B cell (primary cell): ENCODE measurements at regions of chr1 and their contacts with region 1.

Region 1: DNA sequence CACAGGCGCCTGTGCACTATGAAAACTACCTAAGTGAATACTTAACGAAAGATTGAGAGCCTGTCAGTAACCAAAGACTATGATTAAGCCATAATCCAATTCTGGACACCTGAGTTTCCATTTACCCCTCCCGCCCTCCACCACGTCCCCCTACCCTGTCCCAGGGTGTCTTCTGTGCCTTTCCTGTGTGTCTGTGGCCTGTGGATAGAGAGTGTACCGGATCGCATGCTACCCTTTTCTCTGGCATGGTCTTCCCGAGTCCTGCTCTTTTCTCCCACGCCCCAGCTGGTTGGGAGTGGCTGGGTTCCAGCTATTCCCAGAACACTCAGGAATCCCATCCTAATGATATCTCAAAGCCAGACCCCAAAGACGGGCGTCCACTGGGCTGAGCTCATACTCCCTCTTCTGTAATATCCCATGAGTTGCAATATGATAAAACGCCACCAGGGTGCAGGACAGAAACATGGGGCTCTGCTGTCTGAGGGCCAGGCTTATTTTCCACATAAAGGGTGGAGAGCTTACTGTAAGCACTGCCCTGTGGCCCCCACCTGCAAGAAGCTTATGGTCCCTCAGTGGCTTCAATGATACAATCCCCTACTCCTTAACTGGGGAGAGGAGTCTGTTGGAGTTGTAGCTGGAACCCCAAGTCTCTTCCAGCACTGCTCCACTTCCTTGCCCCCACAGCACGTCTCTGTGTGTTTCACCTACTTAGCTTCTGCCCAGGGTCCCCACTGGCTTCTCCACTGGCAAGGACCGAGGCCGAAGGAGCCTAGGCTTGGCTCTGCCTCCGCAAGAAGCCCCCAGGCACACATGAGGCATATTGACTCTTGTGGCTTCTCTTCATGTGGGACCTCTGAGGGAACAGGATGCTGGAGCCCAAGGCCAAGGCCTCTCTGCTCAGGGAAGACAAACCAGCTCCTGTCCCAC is 17.6 kb upstream of the ALX3 start:
- DNase-seq: peak; percentile 72
- ATAC-seq: peak; percentile 59
- H3K4me3 ChIP-seq: no peak overlapping the region
- H3K4me3 Mint-ChIP-seq: no peak overlapping the region
- H3K27ac ChIP-seq: no peak overlapping the region
- H3K27ac Mint-ChIP-seq: no peak overlapping the region
- H3K4me1 ChIP-seq: peaks cover 10 to 18% of the 10 kb centered on the region in 2 donors
- H3K4me1 Mint-ChIP-seq: peaks cover 11% of the 10 kb centered on the region
- H3K27me3 ChIP-seq: peaks cover 0 to 47% (median 19%) of the 10 kb centered on the region in 4 experiments
- H3K27me3 Mint-ChIP-seq: peaks cover 48% of the 10 kb centered on the region
- CTCF ChIP-seq: peak; percentile 79

Region 2: GRCh38 chr1:110068646-110069403 is 19.2 kb before region 1 on chr1:
- CTCF ChIA-PET with region 1: interaction called, 9 read pairs
- POLR2A ChIA-PET with region 1: no interaction called
- intact Hi-C with region 1: loop called (anchors 2 kb)
- DNase-seq: peak; percentile 78
- ATAC-seq: peak; percentile 47
- H3K4me3 ChIP-seq: peak overlapping the region; percentile 9 to 61 (median 47)
- H3K4me3 Mint-ChIP-seq: peak overlapping the region; percentile 94
- H3K27ac ChIP-seq: no peak overlapping the region
- H3K27ac Mint-ChIP-seq: peak overlapping the region; percentile 71
- H3K4me1 ChIP-seq: peaks cover 34 to 40% of the 10 kb centered on the region in 2 donors
- H3K4me1 Mint-ChIP-seq: peaks cover 25% of the 10 kb centered on the region
- H3K27me3 ChIP-seq: peaks cover 0 to 64% (median 44%) of the 10 kb centered on the region in 4 experiments
- H3K27me3 Mint-ChIP-seq: peaks cover 62% of the 10 kb centered on the region
- CTCF ChIP-seq: no peak

Region 3: GRCh38 chr1:110076789-110077500 is 11.1 kb before region 1 on chr1:
- CTCF ChIA-PET with region 1: interaction called, 19 read pairs
- POLR2A ChIA-PET with region 1: no interaction called
- intact Hi-C with region 1: no loop called
- DNase-seq: no peak
- ATAC-seq: no peak
- H3K4me3 ChIP-seq: no peak overlapping the region
- H3K4me3 Mint-ChIP-seq: no peak overlapping the region
- H3K27ac ChIP-seq: no peak overlapping the region
- H3K27ac Mint-ChIP-seq: no peak overlapping the region
- H3K4me1 ChIP-seq: no peaks in the 10 kb centered on the region
- H3K4me1 Mint-ChIP-seq: no peaks in the 10 kb centered on the region
- H3K27me3 ChIP-seq: peaks cover 0 to 37% (median 10%) of the 10 kb centered on the region in 4 experiments
- H3K27me3 Mint-ChIP-seq: peaks cover 65% of the 10 kb centered on the region
- CTCF ChIP-seq: no peak

Region 4: GRCh38 chr1:110097887-110098681 is 10.0 kb after region 1 on chr1:
- CTCF ChIA-PET with region 1: interaction called, 47 read pairs
- POLR2A ChIA-PET with region 1: no interaction called
- intact Hi-C with region 1: no loop called
- DNase-seq: no peak
- ATAC-seq: no peak
- H3K4me3 ChIP-seq: no peak overlapping the region
- H3K4me3 Mint-ChIP-seq: no peak overlapping the region
- H3K27ac ChIP-seq: no peak overlapping the region
- H3K27ac Mint-ChIP-seq: no peak overlapping the region
- H3K4me1 ChIP-seq: peaks cover 17 to 22% of the 10 kb centered on the region in 2 donors
- H3K4me1 Mint-ChIP-seq: peaks cover 17% of the 10 kb centered on the region
- H3K27me3 ChIP-seq: peaks cover 0 to 3% (median 0%) of the 10 kb centered on the region in 4 experiments
- H3K27me3 Mint-ChIP-seq: peaks cover 18% of the 10 kb centered on the region
- CTCF ChIP-seq: no peak